ENCODE measurements at regions of chr11 and their contacts with region 1.

Region 1: GRCh38 chr11:123580557-123581275 is 73.7 kb downstream of the SCN3B start:
- DNase-seq: peak; percentile 32
- ATAC-seq: peak; percentile 83
- H3K4me3 ChIP-seq: no peak overlapping the region
- H3K27ac ChIP-seq: no peak overlapping the region
- H3K4me1 ChIP-seq: no peaks in the 10 kb centered on the region
- H3K27me3 ChIP-seq: peaks cover 17% of the 10 kb centered on the region
- CTCF ChIP-seq: peak; percentile 99

Region 2: DNA sequence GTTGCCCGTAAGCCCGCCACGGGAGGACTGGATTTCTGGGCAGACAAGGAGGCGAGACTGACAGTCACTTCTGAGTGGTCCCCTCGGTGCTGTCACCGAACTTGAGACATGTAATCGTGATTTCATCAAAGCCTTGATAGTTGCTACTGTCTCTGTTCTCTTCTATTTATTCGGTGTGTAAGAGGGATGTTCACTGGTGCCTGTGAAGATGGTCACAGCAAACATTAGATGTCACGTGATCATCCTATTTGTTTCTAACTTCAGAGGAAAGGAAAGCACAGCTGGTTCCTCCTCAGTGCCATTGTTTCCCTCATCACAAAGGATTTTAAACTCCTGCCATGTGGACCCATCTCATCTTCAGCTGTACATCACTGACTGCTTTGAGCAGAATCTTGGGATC is 312.6 kb before region 1 on chr11:
- CTCF ChIA-PET with region 1: interaction called, 14 read pairs
- POLR2A ChIA-PET with region 1: no interaction called
- in situ Hi-C with region 1: no loop called
- intact Hi-C with region 1: no loop called
- DNase-seq: no peak
- ATAC-seq: no peak
- H3K4me3 ChIP-seq: peak overlapping the region in 1 of 2 experiments; percentile 29; a peak in 2 of 4 replicates
- H3K27ac ChIP-seq: no peak overlapping the region
- H3K4me1 ChIP-seq: no peaks in the 10 kb centered on the region
- H3K27me3 ChIP-seq: peaks cover 11% of the 10 kb centered on the region
- CTCF ChIP-seq: no peak

Region 3: DNA sequence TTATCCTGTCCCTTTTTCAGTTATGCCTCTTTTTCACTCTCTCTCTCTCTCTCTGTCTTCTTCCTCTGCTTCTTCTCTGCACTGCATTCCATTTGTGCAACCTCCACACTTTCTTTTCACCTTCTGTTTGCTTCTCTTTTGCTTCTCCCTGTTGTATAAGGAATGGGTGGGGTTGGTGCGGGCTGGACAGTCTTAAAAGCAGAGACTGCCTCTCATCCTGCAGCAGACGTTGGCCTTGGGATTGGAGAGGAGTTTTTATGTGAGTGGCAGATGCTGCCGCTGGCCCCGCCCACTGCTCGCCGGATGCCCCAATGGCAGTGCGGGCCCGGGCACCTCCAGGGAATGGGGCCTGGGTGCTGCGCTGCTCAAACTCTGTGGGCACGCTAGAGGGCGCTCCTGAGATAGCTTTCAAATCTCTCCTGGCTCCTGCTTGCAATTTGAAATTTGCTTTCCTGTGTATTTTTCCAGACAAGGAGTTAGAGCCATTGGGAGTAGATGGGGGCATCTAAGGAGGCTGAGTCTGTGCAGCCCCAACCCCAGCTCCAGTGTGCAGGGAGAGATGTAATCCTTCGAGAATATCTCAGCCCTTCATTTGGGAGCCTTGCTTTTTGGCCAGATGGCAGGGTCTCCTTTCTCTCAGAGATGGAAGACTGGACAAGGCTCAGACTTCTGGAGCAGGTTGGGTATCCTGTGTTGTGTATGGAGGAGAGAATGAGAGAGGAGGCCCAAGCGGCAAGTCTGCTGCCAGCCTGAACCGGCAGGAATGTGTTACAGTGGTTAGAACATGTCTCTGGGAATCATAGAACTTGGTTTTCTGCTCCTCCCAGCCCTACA is 69.5 kb before region 1 on chr11:
- CTCF ChIA-PET with region 1: no interaction called
- POLR2A ChIA-PET with region 1: no interaction called
- in situ Hi-C with region 1: no loop called
- intact Hi-C with region 1: loop called (anchors 1 kb)
- DNase-seq: peak; percentile 45
- ATAC-seq: peak; percentile 99
- H3K4me3 ChIP-seq: no peak overlapping the region
- H3K27ac ChIP-seq: no peak overlapping the region
- H3K4me1 ChIP-seq: peaks cover 3% of the 10 kb centered on the region; the same call in 1 of the 2 replicates
- H3K27me3 ChIP-seq: peaks cover 13% of the 10 kb centered on the region
- CTCF ChIP-seq: peak; percentile 98

Region 4: GRCh38 chr11:123736769-123737168 is 156.1 kb after region 1 on chr11:
- CTCF ChIA-PET with region 1: no interaction called
- POLR2A ChIA-PET with region 1: interaction called, 10 read pairs
- in situ Hi-C with region 1: no loop called
- intact Hi-C with region 1: no loop called
- DNase-seq: no peak
- ATAC-seq: no peak
- H3K4me3 ChIP-seq: no peak overlapping the region
- H3K27ac ChIP-seq: no peak overlapping the region
- H3K4me1 ChIP-seq: 0 out of 2 replicates have a peak, but pooled peaks cover 9% of the 10 kb centered on the region
- H3K27me3 ChIP-seq: no peaks in the 10 kb centered on the region
- CTCF ChIP-seq: no peak